Cardiac septum (tissue), 1 donor: ENCODE measurements at regions of chr5 and their contacts with region 1.

Region 1: DNA sequence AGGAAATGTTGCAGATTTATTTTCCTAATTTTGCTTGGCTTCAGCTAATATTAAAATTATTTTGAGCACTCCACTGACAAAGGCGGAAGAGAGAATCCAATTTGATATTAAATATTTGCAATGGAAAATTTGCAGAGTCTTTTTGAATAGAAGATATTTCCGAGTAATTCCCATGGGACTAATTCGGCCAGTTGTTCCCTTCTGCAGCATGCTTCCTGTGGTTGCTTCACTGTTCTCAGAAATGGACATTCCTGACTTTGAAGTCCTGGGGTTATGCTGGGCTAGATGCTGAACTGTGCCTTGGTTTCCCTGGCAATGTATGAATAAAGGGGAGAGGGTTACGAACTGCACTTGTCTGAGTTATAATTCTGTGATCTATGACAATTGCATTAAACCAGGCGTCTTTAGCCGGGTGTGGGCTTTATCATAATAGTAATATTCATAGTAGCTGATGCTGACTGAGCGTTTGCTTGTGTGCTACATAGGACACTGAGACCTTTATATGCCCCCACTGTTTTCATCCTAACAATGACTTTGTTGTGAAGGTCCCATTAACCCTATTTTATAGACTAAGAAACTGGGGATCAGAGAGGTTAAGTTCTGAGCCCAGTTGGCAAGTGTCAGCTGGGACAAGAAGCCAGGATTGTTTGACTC is 114.5 kb upstream of the SPRY4 start:
- DNase-seq: no peak

Region 2: DNA sequence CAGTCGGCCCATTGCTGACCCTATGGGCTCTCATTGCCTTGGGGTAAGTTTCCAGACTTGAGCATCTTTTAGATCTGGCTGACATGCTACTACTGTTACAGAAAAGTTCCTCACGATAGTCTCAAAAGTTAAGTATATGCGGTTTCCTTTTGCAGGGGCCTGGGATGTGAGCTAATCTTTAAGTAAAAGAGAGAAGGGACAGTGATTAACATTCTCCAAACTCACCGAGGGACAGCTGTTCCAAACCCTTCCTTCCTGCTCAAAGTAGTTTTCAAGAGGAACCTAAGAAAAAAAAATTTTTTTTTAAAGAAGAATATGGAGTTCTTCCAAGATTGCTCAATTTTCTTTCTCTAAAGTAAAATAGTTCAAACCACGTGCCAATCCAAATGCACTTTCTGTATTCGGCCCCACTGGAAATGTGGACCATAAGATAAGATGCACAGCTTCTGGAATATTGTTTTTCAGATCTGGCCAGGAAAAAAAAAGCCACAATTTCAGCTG is 53.5 kb after region 1 on chr5:
- intact Hi-C with region 1: loop called (anchors 5 kb)
- DNase-seq: no peak